ENCODE measurements at regions of chr20 and their contacts with region 1.

Region 1: DNA sequence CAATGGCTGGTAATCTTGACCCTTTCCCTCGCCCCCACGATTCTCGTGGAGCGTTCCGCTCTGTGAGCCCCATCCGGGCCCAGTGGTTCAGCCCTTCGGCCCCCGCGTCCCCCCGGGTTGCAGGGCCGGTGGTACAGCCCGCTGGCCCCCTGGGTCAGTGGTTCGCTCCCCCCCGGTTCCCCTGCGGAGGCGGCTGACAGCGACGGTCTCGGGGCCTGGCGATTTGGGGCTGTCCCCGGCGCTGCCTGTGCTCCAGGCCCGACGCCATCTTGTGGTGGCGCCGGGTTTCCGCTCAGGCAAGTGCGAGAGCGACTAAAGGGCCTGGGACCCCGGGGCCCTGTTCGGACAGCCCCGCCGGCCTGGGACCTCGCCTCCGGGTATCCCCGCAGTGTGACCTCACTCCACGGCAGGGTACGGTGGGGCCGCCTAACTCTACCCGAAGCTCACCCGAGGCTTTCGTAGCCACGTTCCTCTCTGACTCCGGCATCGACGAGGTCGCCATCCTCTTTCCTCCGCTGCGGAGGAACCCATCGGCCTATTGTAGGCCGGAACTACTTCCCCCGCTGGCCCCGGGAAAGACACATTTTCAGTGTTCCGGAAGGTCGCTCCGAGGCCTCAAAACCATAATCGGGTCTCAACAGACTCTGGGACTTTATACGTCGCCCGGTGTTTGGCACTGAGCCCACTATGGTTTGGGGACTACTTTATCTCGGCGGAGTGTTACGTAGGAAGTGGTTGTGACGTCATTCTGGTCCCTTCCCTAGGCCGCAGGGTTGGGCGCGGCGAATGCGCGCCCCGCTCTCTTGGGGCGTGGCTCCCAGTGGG is at the start of gene ZNF335:
- DNase-seq: peak; percentile 95
- ATAC-seq: peak; percentile 82
- H3K4me3 Mint-ChIP-seq: peak within 1 kb of the TSS; percentile 82
- H3K27ac Mint-ChIP-seq: peak within 1 kb of the TSS; percentile 99
- H3K4me1 Mint-ChIP-seq: peaks cover 22% of the 10 kb centered on the region
- H3K27me3 Mint-ChIP-seq: no peaks in the 10 kb centered on the region
- total RNA-seq, gene ZNF335: 39.4 to 40.6 TPM

Region 2: GRCh38 chr20:45812157-45813020 is 159.5 kb before region 1 on chr20 and contains the start of gene UBE2C:
- CTCF ChIA-PET with region 1: interaction called, 11 read pairs
- DNase-seq: peak; percentile 99
- ATAC-seq: peak; percentile 99
- H3K4me3 Mint-ChIP-seq: peak within 1 kb of the TSS; percentile 99
- H3K27ac Mint-ChIP-seq: peak within 1 kb of the TSS; percentile 88
- H3K4me1 Mint-ChIP-seq: peaks cover 30% of the 10 kb centered on the region
- H3K27me3 Mint-ChIP-seq: no peaks in the 10 kb centered on the region
- total RNA-seq, gene UBE2C: 206 to 219 TPM

Region 3: DNA sequence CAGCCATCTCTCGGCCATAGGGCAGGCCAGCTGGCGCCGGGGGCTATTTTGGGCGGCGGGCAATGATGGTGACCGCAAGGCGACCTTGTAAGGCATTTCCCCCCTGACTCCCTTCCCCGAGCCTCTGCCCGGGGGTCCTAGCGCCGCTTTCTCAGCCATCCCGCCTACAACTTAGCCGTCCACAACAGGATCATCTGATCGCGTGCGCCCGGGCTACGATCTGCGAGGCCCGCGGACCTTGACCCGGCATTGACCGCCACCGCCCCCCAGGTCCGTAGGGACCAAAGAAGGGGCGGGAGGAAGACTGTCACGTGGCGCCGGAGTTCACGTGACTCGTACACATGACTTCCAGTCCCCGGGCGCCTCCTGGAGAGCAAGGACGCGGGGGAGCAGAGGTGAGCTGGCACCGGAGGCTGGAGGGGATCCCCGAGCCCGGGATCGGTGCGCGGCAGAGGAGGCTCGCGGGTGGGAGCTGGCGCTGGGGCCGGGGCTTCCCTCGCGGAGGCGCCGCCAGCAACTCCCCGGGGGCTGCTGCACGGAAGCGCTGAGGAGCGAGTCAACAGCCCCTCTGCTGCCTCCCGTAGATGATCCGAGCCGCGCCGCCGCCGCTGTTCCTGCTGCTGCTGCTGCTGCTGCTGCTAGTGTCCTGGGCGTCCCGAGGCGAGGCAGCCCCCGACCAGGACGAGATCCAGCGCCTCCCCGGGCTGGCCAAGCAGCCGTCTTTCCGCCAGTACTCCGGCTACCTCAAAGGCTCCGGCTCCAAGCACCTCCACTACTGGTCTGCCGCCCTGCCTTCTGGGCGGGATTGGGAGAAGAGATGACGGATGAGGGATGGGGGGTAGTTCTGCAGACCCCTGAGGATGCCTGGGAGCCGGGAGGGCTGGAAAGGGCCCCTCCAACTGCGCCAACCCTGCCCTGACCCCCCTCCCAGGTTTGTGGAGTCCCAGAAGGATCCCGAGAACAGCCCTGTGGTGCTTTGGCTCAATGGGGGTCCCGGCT is 80.6 kb before region 1 on chr20 and contains the starts of genes CTSA and NEURL2:
- CTCF ChIA-PET with region 1: interaction called, 19 read pairs
- DNase-seq: peak; percentile 91
- ATAC-seq: peak; percentile 88
- H3K4me3 Mint-ChIP-seq: peak within 1 kb of the TSS; percentile 84
- H3K27ac Mint-ChIP-seq: peak within 1 kb of the TSS; percentile 75
- H3K4me1 Mint-ChIP-seq: peaks cover 35% of the 10 kb centered on the region
- H3K27me3 Mint-ChIP-seq: no peaks in the 10 kb centered on the region
- total RNA-seq, gene CTSA: 55.5 to 69.6 TPM
- total RNA-seq, gene NEURL2: 0.91 to 1.9 TPM

Region 4: DNA sequence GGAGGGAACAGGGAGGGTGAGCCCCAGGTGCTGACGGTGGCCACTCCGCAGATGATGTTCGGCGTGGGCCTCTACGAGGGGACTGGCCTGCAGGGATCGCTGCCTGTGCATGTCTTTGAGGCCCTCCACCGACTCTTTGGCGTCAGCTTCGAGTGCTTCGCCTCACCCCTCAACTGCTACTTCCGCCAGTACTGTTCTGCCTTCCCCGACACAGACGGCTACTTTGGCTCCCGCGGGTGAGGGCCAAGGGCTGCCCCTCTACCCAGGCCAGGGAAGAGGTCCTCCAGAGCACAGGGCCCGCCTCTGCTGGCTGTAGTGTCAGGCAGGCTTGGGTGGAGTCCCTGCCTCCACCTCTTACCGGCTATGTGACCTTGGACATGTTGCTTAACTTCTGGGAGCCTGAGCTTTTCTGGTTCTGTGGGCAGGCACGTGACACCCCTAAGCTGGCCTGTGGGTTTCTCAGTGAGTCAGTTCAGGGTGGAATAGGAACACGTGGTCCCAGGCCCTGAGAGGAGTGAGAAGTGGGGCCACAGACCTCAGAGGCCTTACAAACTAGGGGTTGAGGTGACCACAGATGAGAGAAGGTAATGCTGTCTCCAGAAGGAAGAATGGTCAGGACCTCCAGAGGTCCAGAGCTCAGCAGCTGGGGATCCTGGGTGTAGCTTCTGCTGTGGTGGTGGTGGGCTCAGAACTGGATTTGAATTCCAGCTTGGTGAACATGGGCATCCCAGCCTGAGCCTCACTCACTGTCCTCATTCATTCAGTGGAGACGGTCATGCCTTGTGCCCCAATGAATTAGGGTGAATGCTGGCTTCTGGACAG is 25.5 kb before region 1 on chr20:
- CTCF ChIA-PET with region 1: interaction called, 114 read pairs
- DNase-seq: peak; percentile 85
- ATAC-seq: peak; percentile 69
- H3K4me3 Mint-ChIP-seq: no peak overlapping the region
- H3K27ac Mint-ChIP-seq: peak overlapping the region; percentile 83
- H3K4me1 Mint-ChIP-seq: peaks cover 38% of the 10 kb centered on the region
- H3K27me3 Mint-ChIP-seq: no peaks in the 10 kb centered on the region

Region 5: DNA sequence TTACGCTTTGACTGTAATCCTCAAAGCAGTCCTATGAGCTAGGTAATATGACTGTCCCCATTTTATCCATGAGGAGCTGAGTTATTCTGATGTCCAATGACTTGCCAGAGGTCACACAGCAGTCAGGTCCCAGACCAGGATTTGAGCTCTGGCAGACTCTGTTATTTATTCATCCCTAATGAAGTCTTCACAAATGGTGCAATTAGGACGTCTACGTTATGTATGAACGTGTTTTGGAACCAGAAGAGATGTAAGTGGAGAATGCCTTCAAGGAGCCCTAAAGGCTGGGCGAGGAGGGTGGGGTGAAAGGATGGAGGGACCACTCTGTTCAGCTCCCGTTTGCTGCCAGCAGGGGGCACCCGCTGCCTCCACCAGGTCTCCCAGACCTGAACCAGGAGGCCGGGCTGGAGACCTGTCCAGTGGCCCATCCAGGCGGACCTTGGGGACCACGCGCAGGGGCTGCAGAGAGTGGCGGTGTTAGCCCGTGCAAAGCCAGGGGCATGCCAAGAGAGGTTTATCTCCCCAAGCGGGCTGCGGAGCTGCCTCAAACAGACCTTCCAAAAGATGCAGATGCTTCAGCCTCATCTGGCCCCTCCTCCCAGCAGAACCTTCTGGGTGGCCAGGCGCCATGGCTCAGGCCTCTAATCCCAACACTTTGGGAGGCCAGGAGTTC is 15.4 kb after region 1 on chr20:
- CTCF ChIA-PET with region 1: interaction called, 117 read pairs
- DNase-seq: peak; percentile 84
- ATAC-seq: peak; percentile 97
- H3K4me3 Mint-ChIP-seq: no peak overlapping the region
- H3K27ac Mint-ChIP-seq: no peak overlapping the region
- H3K4me1 Mint-ChIP-seq: peaks cover 15% of the 10 kb centered on the region
- H3K27me3 Mint-ChIP-seq: peaks cover 25% of the 10 kb centered on the region

Region 6: GRCh38 chr20:46022411-46023147 is 50.7 kb after region 1 on chr20:
- CTCF ChIA-PET with region 1: interaction called, 12 read pairs
- DNase-seq: peak; percentile 82
- ATAC-seq: peak; percentile 61
- H3K4me3 Mint-ChIP-seq: peak overlapping the region; percentile 70
- H3K27ac Mint-ChIP-seq: no peak overlapping the region
- H3K4me1 Mint-ChIP-seq: peaks cover 19% of the 10 kb centered on the region
- H3K27me3 Mint-ChIP-seq: peaks cover 46% of the 10 kb centered on the region